ENCODE measurements at regions of chr16 and their contacts with region 1.

Region 1: GRCh38 chr16:3150346-3151218 is 15.8 kb downstream of the ZNF213 start:
- DNase-seq: peak; percentile 88 to 100 (median 94)
- ATAC-seq: peak; percentile 84 to 88 (median 88)
- H3K4me3 ChIP-seq: peak overlapping the region; percentile 83 to 84
- H3K4me3 Mint-ChIP-seq: peak overlapping the region; percentile 85 to 93 (median 86)
- H3K27ac ChIP-seq: peak overlapping the region; percentile 75
- H3K27ac Mint-ChIP-seq: peak overlapping the region; percentile 87 to 90
- H3K4me1 ChIP-seq: peaks cover 4 to 38% of the 10 kb centered on the region in 2 experiments
- H3K4me1 Mint-ChIP-seq: peaks cover 20 to 27% (median 22%) of the 10 kb centered on the region in 3 donors
- H3K27me3 ChIP-seq: peaks cover 0 to 17% of the 10 kb centered on the region in 2 experiments
- H3K27me3 Mint-ChIP-seq: peaks cover 0 to 5% of the 10 kb centered on the region in 2 donors

Region 2: DNA sequence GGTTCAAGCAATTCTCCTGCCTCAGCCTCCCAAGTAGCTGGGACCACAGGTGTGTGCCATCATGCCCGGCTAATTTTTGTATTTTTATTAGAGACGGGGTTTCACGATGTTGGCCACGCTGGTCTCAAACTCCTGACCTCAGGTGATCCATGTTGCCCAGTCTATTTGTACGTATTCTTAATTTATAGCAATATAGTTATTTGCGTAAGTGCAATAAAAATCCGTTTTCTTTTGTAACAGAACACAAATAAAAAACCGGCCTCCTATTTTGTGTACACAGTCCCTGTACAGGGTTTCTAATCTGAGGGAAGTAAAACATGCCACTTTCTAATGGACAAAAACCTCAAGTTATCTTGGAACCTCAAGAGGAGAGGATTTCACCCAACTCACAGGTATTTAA is 890.3 kb before region 1 on chr16:
- CTCF ChIA-PET with region 1: no interaction called
- POLR2A ChIA-PET with region 1: interaction called in 1 of 2 experiments, 18 read pairs
- DNase-seq: no peak
- ATAC-seq: no peak
- H3K4me3 ChIP-seq: no peak overlapping the region
- H3K4me3 Mint-ChIP-seq: no peak overlapping the region
- H3K27ac ChIP-seq: no peak overlapping the region
- H3K27ac Mint-ChIP-seq: no peak overlapping the region
- H3K4me1 ChIP-seq: peaks cover 0 to under 1% of the 10 kb centered on the region in 2 experiments
- H3K4me1 Mint-ChIP-seq: peaks cover 9 to 11% (median 9%) of the 10 kb centered on the region in 3 donors
- H3K27me3 ChIP-seq: no peaks in the 10 kb centered on the region
- H3K27me3 Mint-ChIP-seq: no peaks in the 10 kb centered on the region

Region 3: GRCh38 chr16:3099732-3100499 is 50.7 kb before region 1 on chr16:
- CTCF ChIA-PET with region 1: interaction called in 1 of 2 experiments, 14 read pairs
- POLR2A ChIA-PET with region 1: no interaction called
- DNase-seq: peak; percentile 69 to 91 (median 79)
- ATAC-seq: peak; percentile 82 to 88 (median 84)
- H3K4me3 ChIP-seq: peak overlapping the region; percentile 2 to 33
- H3K4me3 Mint-ChIP-seq: peak overlapping the region; percentile 66 to 75 (median 70)
- H3K27ac ChIP-seq: peak overlapping the region; percentile 25
- H3K27ac Mint-ChIP-seq: peak overlapping the region; percentile 90
- H3K4me1 ChIP-seq: peaks cover 16 to 56% of the 10 kb centered on the region in 2 experiments
- H3K4me1 Mint-ChIP-seq: peaks cover 36 to 54% (median 40%) of the 10 kb centered on the region in 3 donors
- H3K27me3 ChIP-seq: no peaks in the 10 kb centered on the region
- H3K27me3 Mint-ChIP-seq: no peaks in the 10 kb centered on the region

Region 4: DNA sequence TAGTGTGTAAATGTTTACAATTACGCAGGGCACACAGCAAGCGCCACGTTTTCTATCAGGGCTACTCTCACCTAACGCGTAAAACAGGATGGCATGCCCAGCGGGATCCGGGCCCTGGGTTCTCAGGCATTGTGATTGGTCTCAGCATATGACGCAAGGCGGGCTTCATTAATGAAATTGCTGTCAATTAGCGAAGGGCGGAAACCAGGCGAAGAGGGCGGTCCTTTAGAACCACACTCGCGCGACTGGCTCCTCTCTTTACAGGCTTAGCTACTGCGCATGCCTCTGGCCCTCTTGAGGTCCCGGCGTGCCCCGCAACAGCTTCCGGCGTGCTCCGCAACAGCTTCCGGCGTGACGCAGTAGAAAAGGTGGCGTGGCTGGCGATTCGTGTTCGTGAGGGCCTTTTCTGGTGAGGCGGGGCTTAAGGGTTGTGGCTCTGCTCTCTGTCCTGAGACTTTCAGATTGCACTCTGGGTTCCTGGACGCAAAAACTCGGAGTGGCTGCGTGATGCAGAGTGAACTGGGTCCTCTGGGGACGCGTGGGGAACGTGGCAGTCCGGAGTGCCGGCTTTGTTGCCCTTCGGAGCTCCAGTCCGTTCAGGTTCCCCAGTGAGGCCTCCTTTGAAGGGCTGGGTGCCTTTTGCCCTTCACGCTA is 214.3 kb after region 1 on chr16:
- CTCF ChIA-PET with region 1: no interaction called
- POLR2A ChIA-PET with region 1: no interaction called
- DNase-seq: peak; percentile 64 to 92 (median 82)
- ATAC-seq: peak; percentile 92 to 97 (median 96)
- H3K4me3 ChIP-seq: peak overlapping the region; percentile 48 to 84
- H3K4me3 Mint-ChIP-seq: peak overlapping the region; percentile 81 to 85 (median 83)
- H3K27ac ChIP-seq: peak overlapping the region; percentile 89
- H3K27ac Mint-ChIP-seq: peak overlapping the region; percentile 89
- H3K4me1 ChIP-seq: peaks cover 0 to 14% of the 10 kb centered on the region in 2 experiments
- H3K4me1 Mint-ChIP-seq: peaks cover 11 to 14% (median 14%) of the 10 kb centered on the region in 3 donors
- H3K27me3 ChIP-seq: peaks cover 2 to 10% of the 10 kb centered on the region in 2 experiments
- H3K27me3 Mint-ChIP-seq: peaks cover 18 to 21% of the 10 kb centered on the region in 2 donors